Heart right ventricle (tissue), 16 donors: ENCODE measurements at regions of chr2 and their contacts with region 1.

Region 1: GRCh38 chr2:210099940-210100339 is 71.3 kb downstream of the KANSL1L start:
- DNase-seq: no peak
- ATAC-seq: no peak
- H3K4me3 ChIP-seq: no peak overlapping the region
- H3K27ac ChIP-seq: no peak overlapping the region
- H3K4me1 ChIP-seq: no peaks in the 10 kb centered on the region
- H3K27me3 ChIP-seq: no peaks in the 10 kb centered on the region
- CTCF ChIP-seq: no peak

Region 2: GRCh38 chr2:209806318-209806717 is 293.6 kb before region 1 on chr2:
- intact Hi-C with region 1: no loop called
- DNase-seq: no peak
- ATAC-seq: no peak
- H3K4me3 ChIP-seq: no peak overlapping the region
- H3K27ac ChIP-seq: no peak overlapping the region
- H3K4me1 ChIP-seq: no peaks in the 10 kb centered on the region
- H3K27me3 ChIP-seq: no peaks in the 10 kb centered on the region
- CTCF ChIP-seq: no peak

Region 3: DNA sequence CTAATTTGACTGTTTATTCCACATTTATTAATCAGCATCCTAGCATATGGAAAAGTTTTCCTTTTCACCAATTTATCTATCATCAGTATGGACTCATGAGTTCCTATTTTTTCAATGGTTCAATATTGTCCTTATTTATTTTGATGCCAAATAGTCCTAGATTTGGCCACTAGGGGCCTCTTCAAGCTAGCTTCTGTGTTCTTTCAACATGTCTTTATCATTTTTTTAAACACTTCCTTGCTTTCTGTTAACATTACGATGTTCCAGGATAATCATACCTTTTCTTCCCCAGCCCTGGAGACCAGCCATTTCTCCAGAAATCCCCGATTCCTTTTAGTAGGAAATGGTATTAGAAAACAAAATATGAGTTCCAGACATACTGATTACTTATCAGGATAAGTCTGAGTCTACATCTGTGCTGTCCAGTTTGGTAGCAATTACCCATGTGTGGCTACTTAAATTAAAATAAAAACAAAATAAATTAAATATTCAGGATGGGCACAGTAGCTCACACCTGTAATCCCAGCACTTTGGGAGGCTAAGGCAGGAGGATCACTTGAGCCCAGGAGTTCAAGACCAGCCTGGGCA is 26.9 kb before region 1 on chr2:
- intact Hi-C with region 1: loop called in 1 of 10 experiments (anchors 2 kb)
- DNase-seq: no peak
- ATAC-seq: no peak
- H3K4me3 ChIP-seq: no peak overlapping the region
- H3K27ac ChIP-seq: no peak overlapping the region
- H3K4me1 ChIP-seq: peaks cover 0 to 5% (median 0%) of the 10 kb centered on the region in 9 donors
- H3K27me3 ChIP-seq: no peaks in the 10 kb centered on the region
- CTCF ChIP-seq: peak in 8 of 9 donors; percentile 23 to 68 (median 61)

Region 4: GRCh38 chr2:210224941-210225672 is 125.2 kb after region 1 on chr2 and contains the start of gene ACADL:
- intact Hi-C with region 1: no loop called
- DNase-seq: peak; percentile 7 to 47
- ATAC-seq: peak; percentile 82 to 94 (median 90)
- H3K4me3 ChIP-seq: peak within 1 kb of the TSS; percentile 9 to 71 (median 58)
- H3K27ac ChIP-seq: peak within 1 kb of the TSS in 5 of 10 donors; percentile 15 to 58 (median 34)
- H3K4me1 ChIP-seq: peaks cover 0 to 13% (median 6%) of the 10 kb centered on the region in 9 donors
- H3K27me3 ChIP-seq: peaks cover 0 to 71% (median 20%) of the 10 kb centered on the region in 7 donors
- CTCF ChIP-seq: no peak
- total RNA-seq, gene ACADL: 0.52 to 4.3 (median 0.86) TPM